Activated CD4-positive, alpha-beta T cell treated with anti-CD3 and anti-CD28 coated beads, Interleukin-2, amount 10 ng/mL, durations not matched to agents 24 days and 14 days (primary cell): ENCODE measurements at regions of chr10 and their contacts with region 1.

Region 1: GRCh38 chr10:70602665-70603448 is at the start of gene PRF1:
- DNase-seq: peak; percentile 94
- H3K4me3 Mint-ChIP-seq: peak within 1 kb of the TSS; percentile 85
- H3K27ac Mint-ChIP-seq: peak within 1 kb of the TSS; percentile 88
- H3K4me1 Mint-ChIP-seq: peaks cover 34% of the 10 kb centered on the region
- H3K27me3 Mint-ChIP-seq: peaks cover 2% of the 10 kb centered on the region
- total RNA-seq, gene PRF1: 76.5 and 79.9 TPM in 2 replicates

Region 2: DNA sequence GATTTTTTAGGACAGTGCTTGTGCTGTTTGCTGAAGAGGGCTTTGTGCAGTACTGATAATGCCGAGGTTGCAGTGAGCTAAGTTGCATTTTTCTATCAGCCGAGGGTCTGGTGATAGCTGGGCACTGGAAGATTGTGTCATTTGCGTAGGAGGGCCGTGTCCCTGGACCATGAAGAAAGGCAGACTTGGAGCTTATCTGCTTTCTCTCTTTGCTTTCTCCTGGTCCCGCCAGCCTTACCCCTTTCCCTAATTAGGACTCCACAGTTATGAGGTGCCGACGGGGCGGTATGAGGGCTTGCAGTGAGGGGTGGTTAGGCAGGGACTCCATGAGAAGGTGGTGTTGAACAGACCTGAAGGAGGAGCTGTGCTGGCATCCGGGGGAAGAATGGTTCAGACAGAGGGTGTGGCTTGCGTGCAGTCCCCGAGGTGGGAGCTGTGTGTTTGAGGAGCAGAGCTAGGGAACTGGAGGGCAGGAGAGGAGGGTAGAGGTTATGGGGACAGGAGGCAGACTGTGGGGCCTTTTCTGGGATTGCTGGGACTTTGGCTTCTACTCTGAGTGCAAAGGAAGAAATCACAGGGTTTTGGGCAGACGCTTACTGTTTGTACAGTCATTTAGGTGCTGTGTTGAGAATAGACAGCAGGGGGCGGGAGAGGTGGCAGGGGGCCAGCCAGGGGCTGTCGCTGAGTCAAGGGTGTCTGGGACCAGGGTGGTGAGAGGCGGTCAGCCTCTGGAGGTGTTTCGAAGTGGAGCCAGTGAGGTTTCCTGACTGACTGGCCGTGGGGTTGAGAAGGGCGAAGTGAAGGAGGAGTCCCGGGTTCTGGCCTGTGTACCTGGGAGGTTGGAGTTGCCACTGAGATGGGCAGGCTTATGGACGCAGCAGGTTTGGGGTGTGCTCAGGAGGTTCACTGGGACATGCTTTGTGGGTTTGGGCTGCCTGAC is 43.7 kb before region 1 on chr10:
- intact Hi-C with region 1: loop called (anchors 5 kb)
- DNase-seq: peak; percentile 90
- H3K4me3 Mint-ChIP-seq: peak overlapping the region; percentile 76
- H3K27ac Mint-ChIP-seq: peak overlapping the region; percentile 70
- H3K4me1 Mint-ChIP-seq: peaks cover 24% of the 10 kb centered on the region
- H3K27me3 Mint-ChIP-seq: no peaks in the 10 kb centered on the region

Region 3: DNA sequence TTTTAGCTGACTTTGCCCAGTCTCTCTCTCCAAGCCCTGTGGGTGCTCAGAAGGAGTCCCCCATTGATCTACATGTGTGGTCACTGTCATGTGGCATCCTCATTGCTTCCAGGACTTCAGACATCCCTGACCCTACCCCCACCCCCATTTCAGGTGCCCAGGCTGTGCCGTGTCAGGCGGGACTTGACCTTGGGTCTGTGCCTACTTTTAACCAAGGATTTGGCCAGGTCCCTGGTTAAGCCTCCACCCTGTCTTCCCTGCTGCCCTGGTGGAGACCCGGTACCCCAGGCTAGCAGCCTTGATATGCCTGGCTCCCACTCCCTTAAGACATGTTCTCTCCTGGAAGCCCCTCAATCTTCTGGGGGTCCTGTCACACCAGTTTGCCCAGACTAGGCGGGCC is 31.6 kb before region 1 on chr10:
- intact Hi-C with region 1: no loop called
- DNase-seq: no peak
- H3K4me3 Mint-ChIP-seq: no peak overlapping the region
- H3K27ac Mint-ChIP-seq: no peak overlapping the region
- H3K4me1 Mint-ChIP-seq: peaks cover 22% of the 10 kb centered on the region
- H3K27me3 Mint-ChIP-seq: peaks cover 2% of the 10 kb centered on the region

Region 4: GRCh38 chr10:70589762-70590654 is 12.8 kb before region 1 on chr10:
- intact Hi-C with region 1: loop called (anchors 2 kb)
- DNase-seq: no peak
- H3K4me3 Mint-ChIP-seq: no peak overlapping the region
- H3K27ac Mint-ChIP-seq: no peak overlapping the region
- H3K4me1 Mint-ChIP-seq: peaks cover 44% of the 10 kb centered on the region
- H3K27me3 Mint-ChIP-seq: peaks cover 6% of the 10 kb centered on the region